Mammary epithelial cell (primary cell): ENCODE measurements at regions of chr9 and their contacts with region 1.

Region 1: GRCh38 chr9:36665921-36666431 is 93.3 kb downstream of the MELK start:
- DNase-seq: no peak
- H3K4me3 ChIP-seq: no peak overlapping the region
- H3K27ac ChIP-seq: no peak overlapping the region
- H3K4me1 ChIP-seq: peaks cover 15% of the 10 kb centered on the region
- H3K27me3 ChIP-seq: no peaks in the 10 kb centered on the region
- CTCF ChIP-seq: no peak

Region 2: DNA sequence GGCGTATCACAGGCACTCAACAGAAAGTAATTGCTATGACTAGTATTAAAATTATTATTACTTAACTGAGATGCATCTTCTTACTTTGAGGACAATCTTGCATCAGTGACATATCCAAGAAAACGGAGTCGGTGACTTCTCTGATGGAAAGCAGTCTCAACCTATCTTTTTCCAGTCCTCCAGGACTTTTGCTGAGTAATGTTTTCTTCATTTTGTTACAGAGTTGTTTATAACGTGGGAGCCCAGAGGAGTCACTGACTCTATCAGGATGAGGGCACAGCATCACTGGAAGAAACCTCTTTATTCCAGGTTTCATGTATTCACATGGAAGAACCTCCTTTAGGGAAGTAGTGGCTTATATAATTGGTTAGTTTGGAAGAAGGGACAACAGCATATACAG is 144.8 kb before region 1 on chr9:
- CTCF ChIA-PET with region 1: no interaction called
- dilution Hi-C with region 1: no loop called
- in situ Hi-C with region 1: no loop called
- intact Hi-C with region 1: no loop called
- DNase-seq: no peak
- H3K4me3 ChIP-seq: no peak overlapping the region
- H3K27ac ChIP-seq: no peak overlapping the region
- H3K4me1 ChIP-seq: no peaks in the 10 kb centered on the region
- H3K27me3 ChIP-seq: no peaks in the 10 kb centered on the region
- CTCF ChIP-seq: no peak

Region 3: GRCh38 chr9:36721846-36722572 is 56.0 kb after region 1 on chr9:
- CTCF ChIA-PET with region 1: no interaction called
- dilution Hi-C with region 1: loop called (anchors 5 kb)
- in situ Hi-C with region 1: no loop called
- intact Hi-C with region 1: no loop called
- DNase-seq: no peak
- H3K4me3 ChIP-seq: no peak overlapping the region
- H3K27ac ChIP-seq: no peak overlapping the region
- H3K4me1 ChIP-seq: no peaks in the 10 kb centered on the region
- H3K27me3 ChIP-seq: no peaks in the 10 kb centered on the region
- CTCF ChIP-seq: no peak

Region 4: GRCh38 chr9:36913393-36914211 is 247.6 kb after region 1 on chr9:
- CTCF ChIA-PET with region 1: interaction called, 13 read pairs
- dilution Hi-C with region 1: no loop called
- in situ Hi-C with region 1: no loop called
- intact Hi-C with region 1: no loop called
- DNase-seq: no peak
- H3K4me3 ChIP-seq: no peak overlapping the region
- H3K27ac ChIP-seq: no peak overlapping the region
- H3K4me1 ChIP-seq: no peaks in the 10 kb centered on the region
- H3K27me3 ChIP-seq: peaks cover 7% of the 10 kb centered on the region
- CTCF ChIP-seq: no peak